Mammary epithelial cell (primary cell): ENCODE measurements at regions of chr20 and their contacts with region 1.

Region 1: DNA sequence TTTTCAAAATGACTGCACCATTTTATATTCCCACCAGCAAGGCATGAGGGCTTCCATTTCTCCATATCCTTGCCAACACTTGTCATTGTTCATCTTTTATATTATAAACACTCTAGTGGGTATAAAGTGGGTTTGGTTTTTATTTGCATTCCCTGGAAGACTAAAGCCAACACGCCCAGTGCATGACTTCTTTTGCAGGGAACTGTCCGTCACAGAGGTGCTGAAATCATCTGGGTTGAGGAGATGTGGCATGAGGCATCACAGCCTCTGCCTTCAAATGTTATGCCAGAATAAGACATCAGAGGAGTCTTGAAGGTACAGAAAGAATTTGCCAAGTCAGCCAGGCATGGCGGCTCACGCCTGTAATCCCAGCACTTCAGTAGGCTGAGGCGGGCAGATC is 29.9 kb upstream of the FAM210B start:
- DNase-seq: peak; percentile 16
- H3K4me3 ChIP-seq: no peak overlapping the region
- H3K27ac ChIP-seq: no peak overlapping the region
- H3K4me1 ChIP-seq: no peaks in the 10 kb centered on the region
- H3K27me3 ChIP-seq: no peaks in the 10 kb centered on the region
- CTCF ChIP-seq: no peak

Region 2: GRCh38 chr20:56143759-56144158 is 185.1 kb before region 1 on chr20:
- CTCF ChIA-PET with region 1: no interaction called
- dilution Hi-C with region 1: no loop called
- in situ Hi-C with region 1: no loop called
- intact Hi-C with region 1: no loop called
- DNase-seq: no peak
- H3K4me3 ChIP-seq: no peak overlapping the region
- H3K27ac ChIP-seq: no peak overlapping the region
- H3K4me1 ChIP-seq: no peaks in the 10 kb centered on the region
- H3K27me3 ChIP-seq: no peaks in the 10 kb centered on the region
- CTCF ChIP-seq: no peak

Region 3: DNA sequence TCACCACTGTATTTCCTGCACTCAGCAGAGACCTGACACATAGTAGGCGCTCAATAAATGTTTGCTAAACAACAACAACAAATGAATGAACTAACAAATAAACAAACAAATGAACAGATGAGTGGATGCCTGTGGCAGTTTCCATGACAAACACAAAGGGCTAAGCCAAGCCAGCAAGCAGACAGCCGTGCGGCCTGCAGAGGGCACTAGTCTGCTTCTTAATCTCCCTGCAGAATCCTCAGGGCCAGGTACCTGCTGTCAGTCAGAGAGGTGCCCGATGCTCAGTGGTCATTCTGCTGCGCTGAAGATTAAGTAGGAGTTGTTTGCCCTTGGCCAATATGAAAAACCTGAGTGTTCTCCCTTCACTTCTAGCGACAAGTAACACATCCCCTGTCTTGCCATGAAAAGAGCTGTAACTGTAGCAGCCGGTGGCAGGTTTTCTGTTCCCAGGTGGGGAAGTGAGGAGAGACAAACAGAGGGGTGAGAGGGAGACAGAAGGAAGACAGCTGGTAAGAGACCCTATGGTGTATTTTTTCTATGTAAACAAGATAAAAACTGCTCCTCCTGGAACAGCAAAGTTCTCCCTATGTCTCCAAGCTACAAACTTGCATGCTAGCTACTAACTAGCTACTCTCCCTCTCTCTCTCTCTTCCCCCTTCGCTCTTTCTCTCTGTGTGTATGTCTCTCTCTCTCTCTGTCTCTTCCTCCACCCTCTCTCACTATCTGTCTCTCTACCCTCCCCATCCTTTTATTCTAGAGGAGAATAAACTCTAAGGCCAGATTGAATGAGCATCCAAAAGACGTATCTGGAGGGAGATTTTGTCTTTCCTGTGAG is 80.7 kb before region 1 on chr20 and contains the start of gene MC3R:
- CTCF ChIA-PET with region 1: no interaction called
- dilution Hi-C with region 1: no loop called
- in situ Hi-C with region 1: no loop called
- intact Hi-C with region 1: no loop called
- DNase-seq: peak; percentile 39
- H3K4me3 ChIP-seq: no peak within 1 kb of the TSS
- H3K27ac ChIP-seq: no peak within 1 kb of the TSS
- H3K4me1 ChIP-seq: peaks cover 8% of the 10 kb centered on the region
- H3K27me3 ChIP-seq: peaks cover 16% of the 10 kb centered on the region
- CTCF ChIP-seq: peak; percentile 91 to 96
- total RNA-seq, gene MC3R: not detected

Region 4: DNA sequence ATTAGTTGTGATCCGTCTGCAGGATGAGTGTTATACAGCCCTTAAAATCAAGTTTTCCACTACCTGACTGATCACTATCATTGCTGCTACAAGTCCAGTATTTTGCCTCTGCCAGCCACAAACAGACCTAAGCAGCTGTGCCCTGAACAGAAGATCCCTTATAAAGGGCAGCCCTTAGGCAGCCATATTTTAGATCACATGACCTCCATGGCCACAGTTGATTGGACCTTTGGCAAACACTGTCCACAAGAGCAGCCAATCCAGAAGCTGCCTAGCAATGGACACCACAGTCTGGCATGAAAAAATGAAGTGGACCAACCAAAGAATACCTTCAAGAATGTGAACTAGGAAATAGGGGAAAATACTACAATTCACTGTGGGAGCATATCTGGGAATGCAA is 29.5 kb before region 1 on chr20:
- CTCF ChIA-PET with region 1: no interaction called
- dilution Hi-C with region 1: loop called (anchors 5 kb)
- in situ Hi-C with region 1: no loop called
- intact Hi-C with region 1: no loop called
- DNase-seq: no peak
- H3K4me3 ChIP-seq: no peak overlapping the region
- H3K27ac ChIP-seq: no peak overlapping the region
- H3K4me1 ChIP-seq: no peaks in the 10 kb centered on the region
- H3K27me3 ChIP-seq: no peaks in the 10 kb centered on the region
- CTCF ChIP-seq: no peak